Activated B cell treated with CpG ODN at 0.5 μM for 24 hours (primary cell): ENCODE measurements at regions of chr13 and their contacts with region 1.

Region 1: DNA sequence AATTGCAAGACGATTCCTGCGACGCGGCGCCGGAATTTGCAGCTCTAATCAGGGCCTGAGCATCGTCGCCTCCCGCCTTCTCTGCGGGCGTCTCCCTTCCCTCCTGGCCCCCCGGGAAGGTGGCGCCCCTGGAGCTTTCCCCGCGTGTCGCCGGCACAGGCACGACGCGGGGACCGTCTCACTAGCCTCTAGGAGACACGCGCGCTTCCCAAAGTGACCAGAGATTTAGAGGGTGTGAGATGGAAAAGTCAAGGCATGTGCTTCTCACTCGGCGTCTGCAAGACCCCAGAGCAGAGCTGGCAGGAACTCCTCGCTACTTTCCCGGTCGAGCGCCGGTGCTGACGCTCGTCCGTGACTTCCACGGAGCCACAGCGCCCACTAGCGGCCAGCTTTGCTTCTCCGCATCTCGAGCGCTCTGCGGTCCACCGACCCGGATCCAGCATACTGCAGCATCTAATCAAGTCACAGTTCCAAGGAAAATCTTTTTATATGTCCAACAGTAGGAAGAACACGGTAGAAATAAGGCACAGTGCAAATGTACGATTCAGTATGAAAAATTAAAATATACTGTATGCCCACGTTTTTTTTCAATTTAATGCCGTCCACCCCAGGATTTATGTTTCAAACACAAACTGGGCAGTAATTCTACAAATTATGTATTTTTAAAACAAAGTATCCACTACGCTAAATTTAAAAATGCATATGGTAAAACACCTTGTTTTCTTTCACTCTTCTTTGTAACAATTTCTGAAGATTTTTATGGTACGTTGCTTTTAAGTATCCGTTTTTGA is 977 bp upstream of the EFNB2 start:
- DNase-seq: peak; percentile 85
- ATAC-seq: peak; percentile 23
- H3K4me3 Mint-ChIP-seq: peak overlapping the region; percentile 89
- H3K27ac Mint-ChIP-seq: peak overlapping the region; percentile 61
- H3K4me1 Mint-ChIP-seq: peaks cover 21% of the 10 kb centered on the region
- H3K27me3 Mint-ChIP-seq: peaks cover 19% of the 10 kb centered on the region
- CTCF ChIP-seq: peak; percentile 77

Region 2: DNA sequence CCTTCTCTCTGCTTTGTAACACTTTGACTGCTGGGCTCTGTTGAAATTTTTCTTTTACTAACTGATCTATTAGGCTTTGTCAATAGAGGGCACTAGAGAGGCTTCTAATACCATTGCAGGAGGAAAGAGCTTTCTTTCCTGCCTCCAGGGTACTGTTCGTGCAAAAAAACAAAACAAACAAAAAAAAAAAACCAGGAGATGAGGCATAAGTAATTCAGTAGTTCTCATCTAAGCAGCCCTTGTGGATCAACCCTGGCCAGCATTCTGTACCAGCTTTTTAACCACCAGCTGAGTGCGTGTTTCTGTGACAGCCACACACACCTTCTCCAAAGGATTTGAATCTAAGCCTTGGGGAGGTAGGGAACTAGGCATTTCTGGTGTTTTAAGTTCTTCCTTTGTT is 1762.7 kb before region 1 on chr13:
- CTCF ChIA-PET with region 1: no interaction called
- POLR2A ChIA-PET with region 1: no interaction called
- intact Hi-C with region 1: loop called (anchors 1 kb)
- DNase-seq: no peak
- ATAC-seq: no peak
- H3K4me3 Mint-ChIP-seq: no peak overlapping the region
- H3K27ac Mint-ChIP-seq: no peak overlapping the region
- H3K4me1 Mint-ChIP-seq: no peaks in the 10 kb centered on the region
- H3K27me3 Mint-ChIP-seq: no peaks in the 10 kb centered on the region
- CTCF ChIP-seq: no peak

Region 3: GRCh38 chr13:105410602-105411001 is 1125.8 kb before region 1 on chr13:
- CTCF ChIA-PET with region 1: interaction called, 5 read pairs
- POLR2A ChIA-PET with region 1: no interaction called
- intact Hi-C with region 1: loop called (anchors 5 kb)
- DNase-seq: no peak
- ATAC-seq: no peak
- H3K4me3 Mint-ChIP-seq: no peak overlapping the region
- H3K27ac Mint-ChIP-seq: no peak overlapping the region
- H3K4me1 Mint-ChIP-seq: no peaks in the 10 kb centered on the region
- H3K27me3 Mint-ChIP-seq: no peaks in the 10 kb centered on the region
- CTCF ChIP-seq: no peak

Region 4: GRCh38 chr13:106493533-106494220 is 42.8 kb before region 1 on chr13:
- CTCF ChIA-PET with region 1: no interaction called
- POLR2A ChIA-PET with region 1: no interaction called
- intact Hi-C with region 1: loop called (anchors 2 kb)
- DNase-seq: no peak
- ATAC-seq: peak; percentile 49
- H3K4me3 Mint-ChIP-seq: peak overlapping the region; percentile 4
- H3K27ac Mint-ChIP-seq: no peak overlapping the region
- H3K4me1 Mint-ChIP-seq: peaks cover 23% of the 10 kb centered on the region
- H3K27me3 Mint-ChIP-seq: peaks cover 58% of the 10 kb centered on the region
- CTCF ChIP-seq: no peak

Region 5: GRCh38 chr13:106561551-106562170 is 25.2 kb after region 1 on chr13:
- CTCF ChIA-PET with region 1: interaction called, 17 read pairs
- POLR2A ChIA-PET with region 1: interaction called, 28 read pairs
- intact Hi-C with region 1: loop called (anchors 1 kb)
- DNase-seq: peak; percentile 20
- ATAC-seq: peak; percentile 94
- H3K4me3 Mint-ChIP-seq: peak overlapping the region; percentile 25
- H3K27ac Mint-ChIP-seq: peak overlapping the region; percentile 53
- H3K4me1 Mint-ChIP-seq: peaks cover 73% of the 10 kb centered on the region
- H3K27me3 Mint-ChIP-seq: no peaks in the 10 kb centered on the region
- CTCF ChIP-seq: no peak

Region 6: GRCh38 chr13:106786006-106786563 is 249.6 kb after region 1 on chr13:
- CTCF ChIA-PET with region 1: no interaction called
- POLR2A ChIA-PET with region 1: no interaction called
- intact Hi-C with region 1: no loop called
- DNase-seq: no peak
- ATAC-seq: no peak
- H3K4me3 Mint-ChIP-seq: no peak overlapping the region
- H3K27ac Mint-ChIP-seq: no peak overlapping the region
- H3K4me1 Mint-ChIP-seq: no peaks in the 10 kb centered on the region
- H3K27me3 Mint-ChIP-seq: no peaks in the 10 kb centered on the region
- CTCF ChIP-seq: no peak

Region 7: GRCh38 chr13:106917673-106918556 is 381.5 kb after region 1 on chr13:
- CTCF ChIA-PET with region 1: no interaction called
- POLR2A ChIA-PET with region 1: no interaction called
- intact Hi-C with region 1: loop called (anchors 2 kb)
- DNase-seq: peak; percentile 56
- ATAC-seq: peak; percentile 79
- H3K4me3 Mint-ChIP-seq: peak overlapping the region; percentile 81
- H3K27ac Mint-ChIP-seq: no peak overlapping the region
- H3K4me1 Mint-ChIP-seq: peaks cover 24% of the 10 kb centered on the region
- H3K27me3 Mint-ChIP-seq: peaks cover 19% of the 10 kb centered on the region
- CTCF ChIP-seq: no peak